Cardiac septum (tissue), 1 donor: ENCODE measurements at regions of chr17 and their contacts with region 1.

Region 1: DNA sequence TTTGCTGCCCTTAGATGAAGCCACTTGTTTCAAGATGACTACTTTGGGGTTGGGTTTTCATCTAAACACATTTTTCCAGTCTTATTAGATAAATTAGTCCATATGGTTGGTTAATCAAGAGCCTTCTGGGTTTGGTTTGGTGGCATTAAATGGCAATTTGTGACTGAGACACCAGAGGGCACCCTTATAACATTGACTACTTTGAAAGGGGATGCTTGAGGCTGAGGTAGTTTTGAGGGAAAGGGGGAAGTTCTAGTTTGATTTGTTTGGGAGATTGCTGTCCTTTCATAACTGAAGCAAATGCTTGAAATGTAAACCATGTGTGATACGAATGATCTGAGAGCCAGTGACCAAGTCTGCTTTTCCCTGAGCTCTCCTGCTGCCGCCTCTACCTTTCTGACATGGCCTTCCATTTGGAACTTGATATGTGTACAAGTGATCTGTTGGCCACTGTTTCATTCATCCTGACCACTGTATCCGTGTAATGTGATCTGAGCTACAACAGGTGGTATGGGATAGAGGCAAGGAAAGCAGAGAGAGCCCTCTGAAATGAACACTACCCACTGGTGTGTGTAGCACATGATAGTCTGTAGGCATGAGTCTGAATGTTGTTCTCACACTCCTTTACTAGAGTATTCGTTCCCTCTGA is 5.8 kb upstream of the RARA start:
- DNase-seq: peak; percentile 63

Region 2: DNA sequence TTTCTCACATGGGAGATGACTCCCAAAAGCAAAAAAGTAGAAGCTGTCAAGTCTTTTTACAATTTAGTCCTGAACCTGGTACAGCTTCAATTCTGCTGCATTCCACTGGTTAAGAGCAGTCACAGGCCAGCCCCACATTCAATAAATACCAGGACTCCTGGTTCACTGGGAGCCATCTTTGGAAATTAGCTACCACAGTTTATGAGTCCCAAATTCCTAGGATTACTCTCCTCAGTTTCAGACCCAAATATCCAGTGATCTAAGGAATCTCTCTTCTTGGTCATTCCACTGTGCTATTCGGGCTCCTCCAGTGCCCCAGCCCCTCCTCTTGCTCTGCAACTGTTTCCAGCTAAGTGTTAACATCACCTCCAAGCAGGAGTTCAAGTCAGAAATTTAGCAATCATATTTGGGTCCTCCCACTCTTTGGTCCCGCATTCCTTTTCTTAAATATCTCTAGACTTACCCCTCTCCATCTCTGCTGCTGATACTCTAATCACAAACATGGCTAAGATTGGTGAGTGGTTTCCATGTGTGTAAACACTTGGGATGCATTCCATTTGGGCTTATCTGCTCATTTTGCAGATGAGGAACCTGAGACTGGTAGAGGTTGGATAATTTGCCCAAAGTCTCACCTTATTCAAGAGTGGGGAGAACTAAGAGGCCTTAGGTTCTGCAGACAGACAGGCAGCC is 93.6 kb before region 1 on chr17:
- intact Hi-C with region 1: no loop called
- DNase-seq: no peak

Region 3: GRCh38 chr17:40317880-40318829 is 15.0 kb after region 1 on chr17:
- intact Hi-C with region 1: no loop called
- DNase-seq: peak; percentile 98

Region 4: DNA sequence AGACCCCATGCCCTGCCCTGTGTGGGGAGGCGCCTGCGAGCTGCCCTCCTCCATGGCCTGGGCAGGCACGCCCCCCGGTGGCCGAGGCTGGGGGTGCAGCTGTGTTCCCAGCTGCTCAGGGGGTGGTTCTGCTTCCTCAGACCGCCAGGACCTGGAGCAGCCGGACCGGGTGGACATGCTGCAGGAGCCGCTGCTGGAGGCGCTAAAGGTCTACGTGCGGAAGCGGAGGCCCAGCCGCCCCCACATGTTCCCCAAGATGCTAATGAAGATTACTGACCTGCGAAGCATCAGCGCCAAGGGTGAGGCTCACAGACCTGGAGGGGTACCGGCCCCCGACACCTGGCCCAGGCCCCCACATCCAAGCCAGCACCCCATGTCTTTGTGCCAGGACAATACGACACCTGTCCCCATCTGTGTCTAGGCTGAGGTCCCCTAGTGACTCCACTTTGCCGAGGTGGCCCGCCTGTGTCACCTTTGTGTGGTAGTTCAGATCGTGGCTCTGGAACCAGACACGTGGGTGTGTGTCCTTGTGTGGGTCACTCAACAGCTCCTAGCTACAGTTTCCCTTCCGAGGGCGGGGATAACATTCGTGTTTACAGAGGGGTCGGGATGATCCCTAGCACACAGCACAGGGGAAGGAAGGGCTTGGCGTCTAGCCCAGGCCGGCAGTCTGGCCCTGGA is 52.1 kb after region 1 on chr17:
- intact Hi-C with region 1: loop called (anchors 1 kb)
- DNase-seq: peak; percentile 89

Region 5: DNA sequence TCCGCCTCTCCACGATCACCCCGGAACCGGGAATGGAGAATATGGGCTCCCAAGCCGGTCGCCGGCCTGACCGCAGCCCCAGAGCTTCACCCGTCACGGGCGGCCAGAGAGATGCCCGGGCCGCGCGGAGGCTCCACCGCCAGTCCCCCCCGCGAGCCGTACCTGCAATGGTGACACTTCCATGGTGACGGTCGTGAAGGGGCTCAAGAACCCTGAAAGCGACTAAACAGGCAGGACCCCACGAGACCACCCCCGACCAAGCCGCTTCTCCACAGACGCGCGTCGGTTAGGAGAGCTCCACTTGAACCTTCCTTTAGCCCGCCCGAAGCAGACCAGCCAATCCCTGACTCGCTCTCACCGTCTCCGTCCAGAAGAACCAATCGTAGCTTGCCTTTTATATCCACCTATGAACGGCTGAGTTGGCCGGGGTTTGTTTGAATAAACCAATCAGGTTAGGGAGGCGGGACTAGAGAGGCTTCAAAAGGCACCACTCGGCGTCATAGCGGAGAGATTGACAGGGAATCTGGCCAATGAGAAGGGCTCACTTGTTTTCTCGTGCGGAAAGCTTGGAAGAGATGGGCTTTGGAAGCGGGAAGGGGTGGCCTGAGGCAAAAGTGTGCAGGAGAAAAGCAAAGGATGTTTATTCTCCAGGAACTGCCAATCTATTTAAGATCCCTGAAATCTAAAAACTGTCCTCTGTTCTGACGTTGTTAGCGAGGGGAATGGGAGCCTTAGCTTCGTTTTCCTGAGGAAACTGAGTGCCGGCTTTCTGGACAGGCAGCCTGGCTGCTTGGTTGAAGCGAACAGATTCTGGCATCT is 114.7 kb after region 1 on chr17 and contains the start of gene TOP2A:
- intact Hi-C with region 1: loop called (anchors 5 kb)
- DNase-seq: peak; percentile 96
- total RNA-seq, gene TOP2A: 0.51 TPM